ENCODE measurements at regions of chr14 and their contacts with region 1.

Region 1: GRCh38 chr14:23478111-23478759 is 8.7 kb downstream of the NGDN start:
- DNase-seq: peak; percentile 74
- H3K4me3 ChIP-seq: no peak overlapping the region
- H3K27ac ChIP-seq: no peak overlapping the region
- H3K4me1 ChIP-seq: peaks cover 6% of the 10 kb centered on the region
- CTCF ChIP-seq: peak; percentile 93

Region 2: DNA sequence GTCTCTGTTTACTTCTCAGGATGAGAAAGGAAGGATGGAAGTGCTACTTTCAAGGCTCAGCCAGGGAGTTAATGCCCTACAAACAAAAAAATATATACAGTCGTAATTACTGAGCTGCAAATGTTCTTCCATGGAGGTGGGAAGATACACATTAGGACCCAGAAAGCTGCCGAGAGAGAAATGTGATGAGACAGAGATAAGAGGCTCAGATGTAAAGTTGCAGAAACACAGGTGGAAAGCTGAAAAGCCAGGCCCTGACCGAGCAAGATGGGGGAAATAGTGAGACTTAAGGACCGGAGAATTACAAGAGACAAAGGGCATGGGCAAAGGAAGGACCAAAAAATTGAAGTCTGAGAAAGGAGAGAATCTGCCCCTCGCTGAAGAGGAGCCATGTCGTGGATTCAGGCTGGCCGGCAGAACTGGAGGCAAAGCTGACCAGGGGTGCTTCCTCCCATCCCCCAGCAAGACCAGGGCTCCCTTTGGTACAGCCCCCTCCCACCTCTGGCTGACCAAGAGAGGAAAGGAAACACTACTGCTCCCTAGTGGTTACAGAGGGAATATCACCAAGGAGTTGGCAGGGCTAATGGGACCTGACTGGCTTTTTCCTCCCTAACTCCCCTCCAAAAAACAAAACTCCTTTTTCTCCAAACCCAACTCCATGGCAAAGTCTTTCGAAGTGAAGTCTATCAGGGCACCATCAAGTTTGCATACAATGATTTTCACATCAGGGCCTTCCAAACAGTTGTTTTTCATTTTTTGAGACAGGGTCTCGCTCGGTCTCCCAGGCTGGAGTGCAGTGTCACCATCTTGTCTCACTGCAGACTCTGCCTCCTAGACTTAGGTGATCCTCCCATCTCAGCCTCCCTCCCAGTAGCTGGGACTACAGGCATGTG is 61.3 kb after region 1 on chr14:
- CTCF ChIA-PET with region 1: interaction called, 3 read pairs
- POLR2A ChIA-PET with region 1: no interaction called
- intact Hi-C with region 1: loop called (anchors 1 kb)
- DNase-seq: peak; percentile 58
- H3K4me3 ChIP-seq: no peak overlapping the region
- H3K27ac ChIP-seq: no peak overlapping the region
- H3K4me1 ChIP-seq: no peaks in the 10 kb centered on the region
- CTCF ChIP-seq: peak; percentile 83

Region 3: GRCh38 chr14:23567192-23568020 is 89.2 kb after region 1 on chr14 and contains the start of gene AP1G2:
- CTCF ChIA-PET with region 1: interaction called, 10 read pairs
- POLR2A ChIA-PET with region 1: interaction called, 3 read pairs
- intact Hi-C with region 1: loop called (anchors 1 kb)
- DNase-seq: peak; percentile 90
- H3K4me3 ChIP-seq: peak within 1 kb of the TSS; percentile 85
- H3K27ac ChIP-seq: peak within 1 kb of the TSS; percentile 55
- H3K4me1 ChIP-seq: peaks cover 29% of the 10 kb centered on the region
- CTCF ChIP-seq: no peak
- total RNA-seq, gene AP1G2: 110 and 129 TPM in 2 replicates